ENCODE measurements at regions of chr22 and their contacts with region 1.

Region 1: GRCh38 chr22:40009292-40009769 is 14.6 kb downstream of the FAM83F start:
- DNase-seq: no peak
- H3K4me3 ChIP-seq: no peak overlapping the region
- H3K27ac ChIP-seq: no peak overlapping the region
- H3K27me3 ChIP-seq: peaks cover 25% of the 10 kb centered on the region
- CTCF ChIP-seq: no peak

Region 2: DNA sequence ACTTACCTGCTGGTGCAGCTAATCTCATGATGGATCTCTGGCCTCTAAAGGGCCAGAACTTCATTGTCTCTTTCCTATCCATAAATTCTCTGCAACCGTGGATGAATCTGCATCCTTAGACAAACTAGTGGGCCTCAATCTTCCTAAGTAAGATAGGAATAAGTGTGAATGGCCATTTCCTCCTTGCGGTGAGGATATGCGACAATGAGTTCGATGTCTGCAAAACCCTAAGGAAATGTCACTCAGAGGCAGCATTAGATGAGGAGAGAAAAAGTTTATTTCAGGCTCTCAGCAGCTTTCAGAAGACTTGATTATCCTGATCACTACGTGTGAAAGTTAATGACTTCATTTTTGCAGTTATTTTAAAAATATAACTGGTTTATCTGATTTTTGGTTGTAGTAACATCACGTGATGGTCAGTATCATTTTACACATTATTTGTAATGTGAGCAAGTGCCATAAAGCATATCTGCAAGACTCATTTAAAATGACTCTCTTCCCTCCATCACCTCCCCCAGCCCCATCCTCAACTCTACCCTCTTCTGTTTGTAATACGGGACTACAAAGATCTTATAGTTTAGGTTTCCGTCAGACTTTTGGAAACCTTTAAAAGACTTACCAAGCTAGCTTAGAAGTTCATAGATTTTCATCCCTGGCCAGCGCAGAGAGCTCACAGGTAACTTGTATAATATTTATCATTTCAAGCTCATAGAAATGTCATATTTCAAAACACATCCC is 98.3 kb before region 1 on chr22:
- CTCF ChIA-PET with region 1: interaction called, 10 read pairs
- POLR2A ChIA-PET with region 1: no interaction called
- DNase-seq: no peak
- H3K4me3 ChIP-seq: no peak overlapping the region
- H3K27ac ChIP-seq: no peak overlapping the region
- H3K27me3 ChIP-seq: peaks cover 34% of the 10 kb centered on the region
- CTCF ChIP-seq: no peak